ENCODE measurements at regions of chr14 and their contacts with region 1.

Region 1: GRCh38 chr14:54652188-54652587 is 85.3 kb downstream of the SAMD4A start:
- DNase-seq: peak; percentile 96
- H3K4me3 ChIP-seq: peak overlapping the region; percentile 29 to 80 (median 30)
- H3K27ac ChIP-seq: peak overlapping the region; percentile 100
- H3K4me1 ChIP-seq: peaks cover 62% of the 10 kb centered on the region
- H3K27me3 ChIP-seq: no peaks in the 10 kb centered on the region
- CTCF ChIP-seq: no peak
- POLR2A ChIP-seq: no peak

Region 2: GRCh38 chr14:54366736-54367735 is 285.2 kb before region 1 on chr14:
- CTCF ChIA-PET with region 1: no interaction called
- POLR2A ChIA-PET with region 1: no interaction called
- dilution Hi-C with region 1: no loop called
- intact Hi-C with region 1: loop called (anchors 1 kb)
- DNase-seq: peak; percentile 69
- H3K4me3 ChIP-seq: no peak overlapping the region
- H3K27ac ChIP-seq: no peak overlapping the region
- H3K4me1 ChIP-seq: peaks cover 38% of the 10 kb centered on the region
- H3K27me3 ChIP-seq: peaks cover 0 to 1% of the 10 kb centered on the region in 2 experiments
- CTCF ChIP-seq: peak; percentile 59 to 67
- POLR2A ChIP-seq: no peak

Region 3: GRCh38 chr14:54627540-54628363 is 24.4 kb before region 1 on chr14:
- CTCF ChIA-PET with region 1: interaction called, 4 read pairs
- POLR2A ChIA-PET with region 1: interaction called, 4 read pairs
- dilution Hi-C with region 1: no loop called
- intact Hi-C with region 1: loop called (anchors 1 kb)
- DNase-seq: peak; percentile 88
- H3K4me3 ChIP-seq: peak overlapping the region; percentile 11 to 57 (median 19)
- H3K27ac ChIP-seq: peak overlapping the region; percentile 97
- H3K4me1 ChIP-seq: peaks cover 63% of the 10 kb centered on the region
- H3K27me3 ChIP-seq: no peaks in the 10 kb centered on the region
- CTCF ChIP-seq: no peak
- POLR2A ChIP-seq: no peak

Region 4: GRCh38 chr14:54676812-54677708 is 24.9 kb after region 1 on chr14:
- CTCF ChIA-PET with region 1: interaction called, 7 read pairs
- POLR2A ChIA-PET with region 1: interaction called, 4 read pairs
- dilution Hi-C with region 1: no loop called
- intact Hi-C with region 1: loop called (anchors 1 kb)
- DNase-seq: peak; percentile 96
- H3K4me3 ChIP-seq: peak overlapping the region in 1 of 3 experiments; percentile 55
- H3K27ac ChIP-seq: peak overlapping the region; percentile 95
- H3K4me1 ChIP-seq: peaks cover 33% of the 10 kb centered on the region
- H3K27me3 ChIP-seq: no peaks in the 10 kb centered on the region
- CTCF ChIP-seq: no peak
- POLR2A ChIP-seq: no peak

Region 5: DNA sequence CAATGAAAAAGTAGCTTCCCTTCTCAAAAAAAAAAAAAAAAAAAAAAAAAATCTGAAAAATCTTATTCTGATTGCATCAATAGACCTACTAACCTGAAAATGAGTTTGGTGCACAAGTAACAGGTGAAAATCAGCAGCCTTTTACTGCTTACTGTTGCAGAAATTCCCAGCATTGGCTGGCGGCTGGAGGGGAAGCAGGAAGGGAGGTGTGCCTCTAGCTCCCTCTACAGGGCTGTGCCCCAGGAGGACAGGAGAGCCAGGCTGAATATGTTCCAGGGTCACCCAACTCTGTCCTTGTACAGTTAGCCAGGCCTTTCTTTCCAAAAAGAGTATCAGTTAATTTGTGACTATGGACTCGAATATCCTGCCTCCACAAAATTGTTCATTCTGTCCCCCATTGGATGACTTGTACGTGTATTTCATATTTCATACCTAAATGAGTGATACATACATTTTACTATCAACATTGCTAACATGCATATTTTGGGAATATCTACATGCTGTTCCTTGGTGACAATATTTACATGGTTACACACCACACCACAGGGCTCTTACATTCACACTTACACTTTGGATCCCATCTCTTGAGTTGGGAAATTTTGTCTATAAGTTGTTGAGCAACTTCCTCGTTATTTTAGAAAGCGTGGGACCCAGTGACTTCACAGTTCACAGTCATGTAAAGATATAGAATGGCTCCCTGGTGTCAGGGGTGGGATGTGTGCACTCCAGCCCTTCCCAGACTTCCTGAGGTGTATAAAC is 39.5 kb after region 1 on chr14:
- CTCF ChIA-PET with region 1: interaction called, 30 read pairs
- POLR2A ChIA-PET with region 1: interaction called, 29 read pairs
- dilution Hi-C with region 1: no loop called
- intact Hi-C with region 1: loop called (anchors 1 kb)
- DNase-seq: peak; percentile 82
- H3K4me3 ChIP-seq: no peak overlapping the region
- H3K27ac ChIP-seq: peak overlapping the region; percentile 25
- H3K4me1 ChIP-seq: peaks cover 18% of the 10 kb centered on the region
- H3K27me3 ChIP-seq: no peaks in the 10 kb centered on the region
- CTCF ChIP-seq: peak; percentile 89 to 92
- POLR2A ChIP-seq: no peak

Region 6: DNA sequence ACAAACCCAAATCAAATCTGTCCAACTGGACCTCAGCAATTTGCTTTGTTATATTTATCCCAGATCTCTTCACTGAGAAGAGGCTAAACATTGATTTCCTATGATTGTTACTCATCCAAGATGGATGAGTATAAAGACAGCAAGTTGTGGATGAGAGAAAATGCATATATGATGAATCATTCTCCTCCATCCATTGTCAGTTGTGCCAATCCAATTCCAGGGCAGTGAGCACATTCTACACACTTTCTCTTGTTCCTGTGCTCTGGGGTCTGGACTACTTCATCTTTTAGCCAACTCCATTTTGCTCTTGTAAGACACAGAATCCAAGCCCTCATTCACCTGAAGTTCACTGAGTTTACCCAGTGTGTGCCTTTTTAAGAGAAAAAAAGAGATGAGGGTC is 144.8 kb after region 1 on chr14:
- CTCF ChIA-PET with region 1: no interaction called
- POLR2A ChIA-PET with region 1: no interaction called
- dilution Hi-C with region 1: no loop called
- intact Hi-C with region 1: no loop called
- DNase-seq: peak; percentile 33
- H3K4me3 ChIP-seq: no peak overlapping the region
- H3K27ac ChIP-seq: no peak overlapping the region
- H3K4me1 ChIP-seq: peaks cover 13% of the 10 kb centered on the region
- H3K27me3 ChIP-seq: no peaks in the 10 kb centered on the region
- CTCF ChIP-seq: no peak
- POLR2A ChIP-seq: no peak